ENCODE measurements at regions of chr9 and their contacts with region 1.

Region 1: GRCh38 chr9:94681508-94681907 is 42.2 kb upstream of the FBP1 start:
- DNase-seq: peak; percentile 18 to 74 (median 49)
- ATAC-seq: peak; percentile 70
- H3K4me3 ChIP-seq: no peak overlapping the region
- H3K4me3 Mint-ChIP-seq: no peak overlapping the region
- H3K27ac ChIP-seq: no peak overlapping the region
- H3K27ac Mint-ChIP-seq: no peak overlapping the region
- H3K4me1 ChIP-seq: no peaks in the 10 kb centered on the region
- H3K4me1 Mint-ChIP-seq: no peaks in the 10 kb centered on the region
- H3K27me3 ChIP-seq: no peaks in the 10 kb centered on the region
- H3K27me3 Mint-ChIP-seq: peaks cover 14% of the 10 kb centered on the region
- CTCF ChIP-seq: peak; percentile 86

Region 2: GRCh38 chr9:94656200-94656599 is 25.3 kb before region 1 on chr9:
- CTCF ChIA-PET with region 1: interaction called, 10 read pairs
- POLR2A ChIA-PET with region 1: no interaction called
- intact Hi-C with region 1: no loop called
- DNase-seq: peak in 7 of 9 experiments; percentile 11 to 69 (median 48)
- ATAC-seq: peak; percentile 96
- H3K4me3 ChIP-seq: peak overlapping the region; percentile 33 to 34
- H3K4me3 Mint-ChIP-seq: peak overlapping the region; percentile 80
- H3K27ac ChIP-seq: peak overlapping the region; percentile 17 to 49
- H3K27ac Mint-ChIP-seq: peak overlapping the region; percentile 78
- H3K4me1 ChIP-seq: peaks cover 13% of the 10 kb centered on the region
- H3K4me1 Mint-ChIP-seq: peaks cover 20% of the 10 kb centered on the region
- H3K27me3 ChIP-seq: no peaks in the 10 kb centered on the region
- H3K27me3 Mint-ChIP-seq: no peaks in the 10 kb centered on the region
- CTCF ChIP-seq: no peak

Region 3: DNA sequence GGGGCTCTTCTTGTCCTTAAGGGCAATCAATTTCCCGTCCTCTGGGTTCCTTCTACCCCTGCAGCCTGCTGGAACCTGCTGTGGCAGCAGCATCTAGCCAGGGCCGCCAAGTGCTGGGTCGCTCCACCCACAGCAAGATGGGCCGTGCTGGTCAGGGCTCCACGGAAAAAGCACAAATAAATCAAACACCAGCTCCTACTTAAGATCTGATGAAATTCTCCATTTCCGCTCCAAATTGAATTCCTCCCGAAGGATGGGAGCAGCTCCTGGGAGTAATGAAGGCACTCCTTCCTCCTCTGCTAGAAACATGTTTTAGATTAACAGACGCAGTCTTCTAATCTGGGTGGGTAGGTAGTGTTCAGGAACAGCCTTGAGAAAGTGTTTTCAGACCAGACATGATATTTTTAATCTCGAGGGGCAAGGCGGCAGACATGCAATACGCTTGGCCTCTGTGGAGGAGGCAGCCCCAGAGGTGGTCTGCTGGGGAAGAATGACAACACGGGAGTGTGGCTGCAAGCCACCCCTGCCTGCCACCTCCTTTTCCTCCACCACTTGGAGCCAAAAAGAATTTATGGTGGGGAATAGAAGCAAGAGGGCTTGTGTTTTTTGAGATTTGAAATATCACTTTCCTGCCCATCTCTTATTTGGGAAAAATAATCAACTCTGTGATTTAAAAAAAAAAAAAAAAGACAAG is 239.0 kb after region 1 on chr9:
- CTCF ChIA-PET with region 1: interaction called, 55 read pairs
- POLR2A ChIA-PET with region 1: no interaction called
- intact Hi-C with region 1: loop called in 1 of 2 experiments (anchors 1 kb)
- DNase-seq: no peak
- ATAC-seq: no peak
- H3K4me3 ChIP-seq: no peak overlapping the region
- H3K4me3 Mint-ChIP-seq: no peak overlapping the region
- H3K27ac ChIP-seq: no peak overlapping the region
- H3K27ac Mint-ChIP-seq: no peak overlapping the region
- H3K4me1 ChIP-seq: no peaks in the 10 kb centered on the region
- H3K4me1 Mint-ChIP-seq: peaks cover 3% of the 10 kb centered on the region
- H3K27me3 ChIP-seq: no peaks in the 10 kb centered on the region
- H3K27me3 Mint-ChIP-seq: no peaks in the 10 kb centered on the region
- CTCF ChIP-seq: no peak

Region 4: GRCh38 chr9:94945197-94946144 is 264.0 kb after region 1 on chr9:
- CTCF ChIA-PET with region 1: no interaction called
- POLR2A ChIA-PET with region 1: no interaction called
- intact Hi-C with region 1: no loop called
- DNase-seq: no peak
- ATAC-seq: no peak
- H3K4me3 ChIP-seq: no peak overlapping the region
- H3K4me3 Mint-ChIP-seq: no peak overlapping the region
- H3K27ac ChIP-seq: no peak overlapping the region
- H3K27ac Mint-ChIP-seq: no peak overlapping the region
- H3K4me1 ChIP-seq: peaks cover under 1% of the 10 kb centered on the region
- H3K4me1 Mint-ChIP-seq: peaks cover 5% of the 10 kb centered on the region
- H3K27me3 ChIP-seq: no peaks in the 10 kb centered on the region
- H3K27me3 Mint-ChIP-seq: no peaks in the 10 kb centered on the region
- CTCF ChIP-seq: no peak

Region 5: DNA sequence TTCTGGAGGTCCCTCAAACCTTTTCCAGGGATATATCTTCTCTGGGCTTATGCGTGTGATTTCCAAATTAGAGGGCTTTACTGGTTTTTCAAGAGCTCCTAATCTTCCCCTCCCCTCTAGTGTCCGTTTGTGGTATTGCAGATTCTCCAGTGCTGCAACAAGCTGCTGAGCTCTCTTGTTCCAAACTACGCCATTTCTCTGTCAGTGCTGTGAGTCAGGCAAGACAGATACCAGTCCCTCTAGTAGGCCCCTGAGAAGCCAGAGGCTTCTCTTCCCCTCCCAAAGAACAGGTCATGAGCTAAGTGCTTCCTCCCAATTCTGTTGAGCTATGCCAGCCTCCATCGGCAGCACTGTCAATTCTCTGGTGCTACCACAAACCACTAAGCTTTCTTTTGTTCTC is 486.5 kb after region 1 on chr9:
- CTCF ChIA-PET with region 1: interaction called, 17 read pairs
- POLR2A ChIA-PET with region 1: no interaction called
- intact Hi-C with region 1: no loop called
- DNase-seq: peak; percentile 12 to 70 (median 46)
- ATAC-seq: peak; percentile 48
- H3K4me3 ChIP-seq: no peak overlapping the region
- H3K4me3 Mint-ChIP-seq: no peak overlapping the region
- H3K27ac ChIP-seq: no peak overlapping the region
- H3K27ac Mint-ChIP-seq: no peak overlapping the region
- H3K4me1 ChIP-seq: no peaks in the 10 kb centered on the region
- H3K4me1 Mint-ChIP-seq: no peaks in the 10 kb centered on the region
- H3K27me3 ChIP-seq: no peaks in the 10 kb centered on the region
- H3K27me3 Mint-ChIP-seq: no peaks in the 10 kb centered on the region
- CTCF ChIP-seq: peak; percentile 64

Region 6: DNA sequence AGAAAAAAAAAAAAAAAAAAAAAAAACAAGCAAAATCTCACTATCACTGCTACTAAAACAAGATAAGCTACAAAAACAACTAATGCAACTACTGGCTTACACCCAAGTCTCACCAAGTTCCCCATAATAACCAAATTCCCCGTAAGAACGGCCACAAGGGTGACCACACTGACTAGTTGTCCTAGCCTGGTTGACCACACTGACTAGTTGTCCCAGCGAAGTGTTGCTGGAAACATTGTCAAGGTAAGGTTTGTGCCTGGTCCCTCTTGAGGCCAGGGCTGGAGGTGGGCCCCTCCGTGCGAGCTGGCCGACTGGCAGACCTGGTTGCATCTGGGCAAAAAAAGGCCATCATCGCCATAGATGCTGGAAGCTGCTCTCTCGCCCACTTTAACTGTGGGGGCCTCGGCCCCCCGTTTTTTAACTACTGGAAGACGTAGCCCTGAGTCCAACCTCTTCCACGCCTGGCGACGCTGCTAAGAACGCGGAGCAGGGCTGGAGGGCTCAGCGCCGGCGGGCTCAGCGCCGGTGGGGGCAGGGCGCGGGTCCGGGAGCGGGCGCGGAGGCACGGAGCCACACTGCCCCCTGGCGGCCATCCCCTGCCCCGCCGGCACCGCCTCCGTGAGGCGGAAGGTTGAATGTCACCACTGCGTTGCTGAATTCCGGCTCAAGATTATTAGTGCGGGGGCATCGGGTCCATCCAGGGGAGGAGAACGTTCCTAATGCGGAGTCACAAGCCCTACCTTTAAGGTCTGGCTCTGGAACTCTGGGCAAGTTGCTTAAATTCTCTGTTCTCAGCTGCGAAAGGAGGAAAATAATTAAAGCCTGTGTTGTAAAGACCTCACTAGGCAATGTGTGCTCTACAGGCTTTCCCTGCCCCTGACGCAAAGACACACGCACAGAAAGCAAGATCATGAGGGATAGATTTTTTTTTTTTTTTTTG is 1536.5 kb after region 1 on chr9:
- CTCF ChIA-PET with region 1: interaction called, 4 read pairs
- POLR2A ChIA-PET with region 1: no interaction called
- intact Hi-C with region 1: loop called in 1 of 2 experiments (anchors 1 kb)
- DNase-seq: peak; percentile 48 to 88 (median 77)
- ATAC-seq: peak; percentile 81
- H3K4me3 ChIP-seq: peak overlapping the region; percentile 9 to 27
- H3K4me3 Mint-ChIP-seq: peak overlapping the region; percentile 80
- H3K27ac ChIP-seq: no peak overlapping the region
- H3K27ac Mint-ChIP-seq: no peak overlapping the region
- H3K4me1 ChIP-seq: peaks cover 8% of the 10 kb centered on the region
- H3K4me1 Mint-ChIP-seq: peaks cover 12% of the 10 kb centered on the region
- H3K27me3 ChIP-seq: peaks cover 0 to 8% of the 10 kb centered on the region in 2 experiments
- H3K27me3 Mint-ChIP-seq: peaks cover 37% of the 10 kb centered on the region
- CTCF ChIP-seq: peak; percentile 98

Measured in CD8-positive, alpha-beta T cell (primary cell).